ENCODE measurements at regions of chr2 and their contacts with region 1.

Region 1: GRCh38 chr2:64453770-64454385 is at the start of gene LGALSL:
- DNase-seq: peak; percentile 86 to 92
- ATAC-seq: peak; percentile 90
- H3K4me3 ChIP-seq: peak within 1 kb of the TSS; percentile 57 to 85
- H3K27ac ChIP-seq: peak within 1 kb of the TSS; percentile 97 to 100
- H3K4me1 ChIP-seq: no peaks in the 10 kb centered on the region
- H3K27me3 ChIP-seq: no peaks in the 10 kb centered on the region
- total RNA-seq, gene LGALSL: 18.5 to 26.8 TPM

Region 2: GRCh38 chr2:64359892-64360657 is 93.8 kb before region 1 on chr2:
- intact Hi-C with region 1: loop called in 1 of 2 experiments (anchors 5 kb)
- DNase-seq: peak; percentile 93 to 94
- ATAC-seq: peak; percentile 93
- H3K4me3 ChIP-seq: no peak overlapping the region
- H3K27ac ChIP-seq: peak overlapping the region; percentile 16 to 18
- H3K4me1 ChIP-seq: no peaks in the 10 kb centered on the region
- H3K27me3 ChIP-seq: no peaks in the 10 kb centered on the region

Region 3: GRCh38 chr2:64404002-64404731 is 49.7 kb before region 1 on chr2:
- intact Hi-C with region 1: loop called (anchors 2 to 5 kb)
- DNase-seq: peak; percentile 89 to 91
- ATAC-seq: peak; percentile 88
- H3K4me3 ChIP-seq: no peak overlapping the region
- H3K27ac ChIP-seq: peak overlapping the region; percentile 51 to 85
- H3K4me1 ChIP-seq: peaks cover 0 to 6% of the 10 kb centered on the region in 2 donors
- H3K27me3 ChIP-seq: no peaks in the 10 kb centered on the region

Region 4: GRCh38 chr2:64488050-64488974 is 34.4 kb after region 1 on chr2:
- intact Hi-C with region 1: loop called (anchors 5 kb)
- DNase-seq: peak; percentile 71 to 90
- ATAC-seq: peak; percentile 76
- H3K4me3 ChIP-seq: no peak overlapping the region
- H3K27ac ChIP-seq: no peak overlapping the region
- H3K4me1 ChIP-seq: peaks cover 0 to 2% of the 10 kb centered on the region in 2 donors
- H3K27me3 ChIP-seq: no peaks in the 10 kb centered on the region

Region 5: DNA sequence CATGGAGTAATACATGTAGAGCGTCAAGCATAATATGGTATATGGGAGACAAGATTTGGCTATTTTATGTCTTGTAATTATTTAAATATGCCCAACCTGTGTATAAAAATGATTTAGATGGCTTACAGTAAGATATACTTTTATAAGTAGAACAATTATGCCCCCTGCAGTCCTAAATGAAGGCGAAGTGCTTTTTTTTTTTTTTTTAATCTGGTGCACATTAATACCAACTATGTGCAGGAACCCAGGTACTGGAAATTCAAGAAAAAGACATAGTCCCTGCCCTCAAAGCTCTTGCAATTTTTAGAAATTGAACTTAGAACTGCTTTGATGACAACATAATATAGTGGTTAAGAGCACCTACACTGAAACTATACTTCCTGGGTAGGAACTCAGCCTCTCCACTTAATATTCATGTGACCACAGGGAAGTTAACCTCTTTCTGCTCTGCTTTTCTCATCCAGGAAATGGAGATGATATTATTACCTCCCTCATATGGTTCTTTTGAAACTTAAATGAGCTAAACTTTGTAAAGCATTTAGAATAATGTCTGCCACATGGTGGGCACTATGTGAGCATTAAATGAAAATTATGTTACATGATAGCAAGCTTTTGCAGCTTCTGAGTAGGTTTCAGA is 108.4 kb after region 1 on chr2:
- intact Hi-C with region 1: loop called in 1 of 2 experiments (anchors 10 kb)
- DNase-seq: no peak
- ATAC-seq: no peak
- H3K4me3 ChIP-seq: no peak overlapping the region
- H3K27ac ChIP-seq: no peak overlapping the region
- H3K4me1 ChIP-seq: peaks cover 0 to 3% of the 10 kb centered on the region in 2 donors
- H3K27me3 ChIP-seq: no peaks in the 10 kb centered on the region

Measured in aorta (tissue), 5 donors.